Activated CD4-positive, alpha-beta T cell treated with anti-CD3 and anti-CD28 coated beads for 36 hours (primary cell): ENCODE measurements at regions of chr1 and their contacts with region 1.

Region 1: GRCh38 chr1:92502247-92502646 is 15.5 kb upstream of the GFI1 start:
- DNase-seq: no peak
- ATAC-seq: peak; percentile 65
- H3K4me3 Mint-ChIP-seq: no peak overlapping the region
- H3K27ac Mint-ChIP-seq: peak overlapping the region; percentile 55
- H3K4me1 Mint-ChIP-seq: peaks cover 40% of the 10 kb centered on the region
- H3K27me3 Mint-ChIP-seq: no peaks in the 10 kb centered on the region

Region 2: DNA sequence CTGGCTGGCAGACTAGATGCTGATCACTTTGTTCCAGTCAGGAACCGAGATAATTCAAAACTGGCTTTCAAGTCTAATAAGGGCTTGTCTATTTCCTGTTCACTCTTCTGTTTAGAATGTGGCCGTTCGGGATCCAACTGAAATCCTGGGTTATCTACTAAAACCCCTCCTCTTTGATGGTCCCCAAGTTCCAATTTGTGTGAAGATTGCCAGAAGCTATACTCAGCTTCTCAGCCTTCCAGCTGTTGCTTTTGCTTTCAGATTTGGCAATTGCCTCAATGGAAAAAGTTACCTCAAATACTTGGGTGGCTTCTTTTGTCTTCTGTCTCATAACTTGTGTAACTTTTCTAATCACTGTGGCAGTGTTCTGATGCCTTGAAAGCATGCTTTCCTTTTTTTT is 378.4 kb before region 1 on chr1:
- CTCF ChIA-PET with region 1: no interaction called
- POLR2A ChIA-PET with region 1: no interaction called
- intact Hi-C with region 1: no loop called
- DNase-seq: peak; percentile 12
- ATAC-seq: peak; percentile 82
- H3K4me3 Mint-ChIP-seq: peak overlapping the region; percentile 27
- H3K27ac Mint-ChIP-seq: peak overlapping the region; percentile 59
- H3K4me1 Mint-ChIP-seq: peaks cover 10% of the 10 kb centered on the region
- H3K27me3 Mint-ChIP-seq: no peaks in the 10 kb centered on the region

Region 3: DNA sequence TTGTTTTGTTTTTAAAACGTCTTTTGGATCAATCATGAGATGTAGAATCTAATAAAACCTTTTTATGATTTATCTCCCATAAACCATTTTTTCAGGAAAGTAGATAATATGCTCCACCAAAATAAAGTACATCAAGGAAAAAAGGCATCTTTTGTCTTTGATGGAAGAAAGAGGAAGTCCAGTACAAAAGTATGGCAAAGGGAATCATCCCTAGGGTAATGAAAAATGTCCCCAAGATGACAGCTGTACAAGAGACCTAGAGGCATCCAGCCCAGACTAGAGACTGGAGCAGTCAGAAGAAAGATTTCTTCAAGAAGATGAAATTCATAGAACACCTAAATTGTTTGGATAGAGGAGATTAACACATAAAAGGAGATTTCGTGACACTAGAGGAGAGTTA is 16.8 kb after region 1 on chr1:
- CTCF ChIA-PET with region 1: interaction called, 3 read pairs
- POLR2A ChIA-PET with region 1: interaction called, 3 read pairs
- intact Hi-C with region 1: loop called in 1 of 2 experiments (anchors 2 kb)
- DNase-seq: no peak
- ATAC-seq: no peak
- H3K4me3 Mint-ChIP-seq: no peak overlapping the region
- H3K27ac Mint-ChIP-seq: no peak overlapping the region
- H3K4me1 Mint-ChIP-seq: peaks cover 26% of the 10 kb centered on the region
- H3K27me3 Mint-ChIP-seq: no peaks in the 10 kb centered on the region

Region 4: DNA sequence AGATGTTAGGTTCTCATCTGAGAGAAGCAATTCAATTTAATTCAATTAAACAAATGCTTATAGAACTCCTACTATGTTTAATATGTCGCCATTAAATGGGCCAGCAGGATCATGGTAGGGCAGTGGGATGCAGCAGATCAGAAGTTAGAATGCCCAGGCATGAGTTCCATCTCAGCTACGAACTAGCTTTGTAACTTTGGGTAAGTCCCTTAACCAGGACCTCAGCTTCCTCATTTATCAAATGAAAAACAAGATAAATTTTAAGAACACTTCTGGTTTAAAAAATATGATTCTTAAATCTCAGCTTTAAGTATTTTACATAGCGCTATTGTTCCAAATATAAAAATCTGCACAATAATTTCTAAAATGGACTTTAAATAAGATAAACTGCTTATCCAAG is 52.0 kb after region 1 on chr1:
- CTCF ChIA-PET with region 1: no interaction called
- POLR2A ChIA-PET with region 1: no interaction called
- intact Hi-C with region 1: no loop called
- DNase-seq: no peak
- ATAC-seq: no peak
- H3K4me3 Mint-ChIP-seq: no peak overlapping the region
- H3K27ac Mint-ChIP-seq: no peak overlapping the region
- H3K4me1 Mint-ChIP-seq: peaks cover 45% of the 10 kb centered on the region
- H3K27me3 Mint-ChIP-seq: no peaks in the 10 kb centered on the region